Psoas muscle (tissue), 8 donors: ENCODE measurements at regions of chr4 and their contacts with region 1.

Region 1: DNA sequence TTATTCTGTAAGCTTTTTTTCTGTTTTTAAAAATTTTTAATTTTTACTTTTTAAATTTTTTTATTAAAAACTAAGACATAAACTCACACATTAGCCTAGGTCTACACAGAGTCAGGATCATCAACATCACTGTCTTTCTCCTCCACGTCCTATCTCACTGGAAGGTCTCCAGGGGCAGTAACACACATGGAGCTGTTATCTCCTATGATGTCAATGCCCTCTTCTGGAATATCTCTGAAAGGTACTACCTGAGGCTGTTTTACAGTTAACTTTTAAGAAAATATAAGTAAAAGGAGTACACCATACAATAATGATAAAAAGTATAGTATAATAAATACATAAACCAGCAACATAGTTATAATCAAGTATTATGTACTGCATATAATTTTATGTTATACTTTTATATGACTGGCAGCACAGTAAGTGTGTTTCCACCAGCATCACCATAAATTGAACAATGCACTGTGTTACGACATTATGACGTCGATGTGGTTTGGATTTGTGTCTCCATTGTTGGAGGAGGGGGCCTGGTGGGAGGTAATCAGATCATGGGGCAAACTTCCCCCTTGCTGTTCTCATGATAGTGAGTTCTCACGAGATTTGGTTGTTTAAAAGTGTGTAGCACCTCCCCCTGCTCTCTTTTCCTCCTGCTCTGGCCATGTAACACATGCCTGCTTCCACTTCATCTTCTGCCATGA is 21.3 kb downstream of the IL15 start:
- DNase-seq: no peak
- ATAC-seq: no peak
- H3K4me3 ChIP-seq: no peak overlapping the region
- H3K27ac ChIP-seq: no peak overlapping the region
- H3K4me1 ChIP-seq: no peaks in the 10 kb centered on the region
- H3K27me3 ChIP-seq: no peaks in the 10 kb centered on the region
- CTCF ChIP-seq: no peak

Region 2: DNA sequence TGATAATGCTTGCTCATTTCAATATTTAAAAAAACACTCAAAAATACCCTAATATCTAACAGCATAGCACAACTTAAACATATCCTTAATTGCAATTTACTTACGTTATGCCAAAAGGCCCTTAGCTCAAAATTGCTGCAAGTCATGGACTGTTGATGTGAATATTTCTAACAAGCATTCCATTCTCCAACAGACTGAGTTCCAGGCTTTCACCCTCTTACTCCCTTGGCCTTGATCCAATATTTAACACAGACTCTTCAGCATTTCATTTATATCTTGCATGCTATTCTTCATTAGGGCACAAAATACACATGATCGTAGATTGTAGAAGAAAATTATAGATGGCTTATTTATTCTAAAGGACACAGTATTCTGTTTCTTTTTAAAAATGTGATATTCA is 620.9 kb before region 1 on chr4:
- intact Hi-C with region 1: no loop called
- DNase-seq: no peak
- ATAC-seq: no peak
- H3K4me3 ChIP-seq: no peak overlapping the region
- H3K27ac ChIP-seq: no peak overlapping the region
- H3K4me1 ChIP-seq: no peaks in the 10 kb centered on the region
- H3K27me3 ChIP-seq: no peaks in the 10 kb centered on the region
- CTCF ChIP-seq: no peak

Region 3: GRCh38 chr4:141346144-141346543 is 311.6 kb before region 1 on chr4:
- intact Hi-C with region 1: loop called in 1 of 2 experiments (anchors 5 kb)
- DNase-seq: no peak
- ATAC-seq: peak; percentile 66 to 87 (median 77)
- H3K4me3 ChIP-seq: no peak overlapping the region
- H3K27ac ChIP-seq: no peak overlapping the region
- H3K4me1 ChIP-seq: no peaks in the 10 kb centered on the region
- H3K27me3 ChIP-seq: no peaks in the 10 kb centered on the region
- CTCF ChIP-seq: peak; percentile 67

Region 4: GRCh38 chr4:141614878-141615586 is 42.7 kb before region 1 on chr4:
- intact Hi-C with region 1: no loop called
- DNase-seq: no peak
- ATAC-seq: no peak
- H3K4me3 ChIP-seq: no peak overlapping the region
- H3K27ac ChIP-seq: no peak overlapping the region
- H3K4me1 ChIP-seq: no peaks in the 10 kb centered on the region
- H3K27me3 ChIP-seq: no peaks in the 10 kb centered on the region
- CTCF ChIP-seq: no peak